H1 (cell line): ENCODE measurements at regions of chr11 and their contacts with region 1.

Region 1: GRCh38 chr11:93234602-93235207 is 36.9 kb upstream of the SLC36A4 start:
- DNase-seq: peak; percentile 49 to 85
- H3K4me3 ChIP-seq: no peak overlapping the region
- H3K27ac ChIP-seq: no peak overlapping the region
- H3K4me1 ChIP-seq: peaks cover 0 to 4% (median 2%) of the 10 kb centered on the region in 4 experiments; a peak in 4 of 7 replicates
- H3K27me3 ChIP-seq: no peaks in the 10 kb centered on the region
- CTCF ChIP-seq: peak; percentile 96 to 99 (median 98)
- EP300 ChIP-seq: no peak
- POLR2A ChIP-seq: no peak
- RAD21 ChIP-seq: peak; percentile 99

Region 2: DNA sequence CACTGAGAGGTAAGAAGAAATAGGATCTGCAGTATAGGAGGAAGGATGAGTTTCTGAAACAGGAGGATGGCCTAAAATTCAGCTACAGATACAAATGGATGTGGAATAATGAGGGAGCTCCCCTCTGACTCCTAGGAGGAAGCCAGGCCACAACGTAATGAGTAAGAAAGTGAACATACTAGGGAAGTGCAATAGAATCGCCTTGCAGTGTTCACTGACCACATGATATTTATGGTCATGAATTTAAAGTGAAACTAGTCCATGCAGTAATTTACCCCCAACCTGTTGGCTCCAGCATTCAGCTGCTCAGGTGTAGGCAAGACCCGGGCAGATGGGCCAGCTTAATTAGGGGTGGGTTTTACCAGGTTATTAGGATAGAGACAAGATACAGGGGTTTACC is 197.5 kb after region 1 on chr11:
- CTCF ChIA-PET with region 1: interaction called, 10 read pairs
- POLR2A ChIA-PET with region 1: no interaction called
- DNase-seq: no peak
- H3K4me3 ChIP-seq: no peak overlapping the region
- H3K27ac ChIP-seq: no peak overlapping the region
- H3K4me1 ChIP-seq: no peaks in the 10 kb centered on the region
- H3K27me3 ChIP-seq: no peaks in the 10 kb centered on the region
- CTCF ChIP-seq: no peak
- EP300 ChIP-seq: no peak
- POLR2A ChIP-seq: no peak
- RAD21 ChIP-seq: no peak

Region 3: DNA sequence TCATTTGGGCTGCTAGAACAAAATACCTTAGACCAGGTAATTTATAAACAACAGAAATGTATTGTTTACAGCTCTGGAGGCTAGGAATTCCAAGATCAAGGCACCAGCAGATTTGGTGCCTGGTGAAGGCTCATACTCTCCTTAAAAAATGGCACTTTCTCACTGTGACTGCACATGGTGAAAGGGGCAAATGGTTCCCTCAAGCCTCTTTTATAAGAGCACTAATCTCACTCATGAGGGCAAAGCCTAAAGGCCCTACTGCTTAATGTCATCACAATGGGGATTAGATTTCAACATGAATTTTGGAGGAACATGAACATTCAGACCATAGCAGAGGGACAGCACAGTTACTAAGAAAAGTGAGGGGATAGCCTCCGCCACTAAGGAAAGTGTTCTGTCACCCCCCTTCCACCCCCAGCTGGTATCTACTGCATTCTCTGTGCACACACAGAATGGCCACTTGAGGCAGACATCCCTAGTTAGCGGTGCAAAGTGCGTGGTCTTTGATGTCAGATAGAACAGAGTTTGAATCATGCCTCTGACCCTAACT is 379.5 kb after region 1 on chr11:
- CTCF ChIA-PET with region 1: interaction called, 55 read pairs
- POLR2A ChIA-PET with region 1: no interaction called
- DNase-seq: no peak
- H3K4me3 ChIP-seq: no peak overlapping the region
- H3K27ac ChIP-seq: no peak overlapping the region
- H3K4me1 ChIP-seq: peaks cover 0 to 3% (median 0%) of the 10 kb centered on the region in 4 experiments; a peak in 1 of 7 replicates
- H3K27me3 ChIP-seq: no peaks in the 10 kb centered on the region
- CTCF ChIP-seq: peak; percentile 50 to 67 (median 61)
- EP300 ChIP-seq: no peak
- POLR2A ChIP-seq: no peak
- RAD21 ChIP-seq: peak; percentile 23 to 35; a peak in 2 of 4 replicates

Region 4: GRCh38 chr11:93652161-93652597 is 417.5 kb after region 1 on chr11:
- CTCF ChIA-PET with region 1: interaction called, 108 read pairs
- POLR2A ChIA-PET with region 1: no interaction called
- DNase-seq: peak in 1 of 2 experiments; percentile 70
- H3K4me3 ChIP-seq: no peak overlapping the region
- H3K27ac ChIP-seq: no peak overlapping the region
- H3K4me1 ChIP-seq: no peaks in the 10 kb centered on the region
- H3K27me3 ChIP-seq: no peaks in the 10 kb centered on the region; a peak in 1 of 7 replicates
- CTCF ChIP-seq: peak in 2 of 3 experiments; percentile 32 to 47; a peak in 2 of 4 replicates
- EP300 ChIP-seq: no peak
- POLR2A ChIP-seq: no peak
- RAD21 ChIP-seq: peak; percentile 53 to 62